Activated CD4-positive, alpha-beta T cell treated with anti-CD3 and anti-CD28 coated beads, Interleukin-2, amount 10 ng/mL, durations not matched to agents 7 days and 5 days (primary cell): ENCODE measurements at regions of chr16 and their contacts with region 1.

Region 1: GRCh38 chr16:89495121-89495520 is 4.8 kb upstream of the ANKRD11 start:
- DNase-seq: no peak
- H3K4me3 Mint-ChIP-seq: no peak overlapping the region
- H3K27ac Mint-ChIP-seq: no peak overlapping the region
- H3K4me1 Mint-ChIP-seq: peaks cover 33% of the 10 kb centered on the region
- H3K27me3 Mint-ChIP-seq: no peaks in the 10 kb centered on the region

Region 2: GRCh38 chr16:89453501-89454321 is 41.4 kb before region 1 on chr16:
- CTCF ChIA-PET with region 1: no interaction called
- POLR2A ChIA-PET with region 1: no interaction called
- DNase-seq: no peak
- H3K4me3 Mint-ChIP-seq: no peak overlapping the region
- H3K27ac Mint-ChIP-seq: peak overlapping the region; percentile 81
- H3K4me1 Mint-ChIP-seq: peaks cover 78% of the 10 kb centered on the region
- H3K27me3 Mint-ChIP-seq: no peaks in the 10 kb centered on the region

Region 3: GRCh38 chr16:89505204-89506112 is 10.3 kb after region 1 on chr16:
- CTCF ChIA-PET with region 1: interaction called, 11 read pairs
- POLR2A ChIA-PET with region 1: interaction called, 4 read pairs
- DNase-seq: peak; percentile 90
- H3K4me3 Mint-ChIP-seq: peak overlapping the region; percentile 73
- H3K27ac Mint-ChIP-seq: peak overlapping the region; percentile 96
- H3K4me1 Mint-ChIP-seq: peaks cover 39% of the 10 kb centered on the region
- H3K27me3 Mint-ChIP-seq: no peaks in the 10 kb centered on the region

Region 4: DNA sequence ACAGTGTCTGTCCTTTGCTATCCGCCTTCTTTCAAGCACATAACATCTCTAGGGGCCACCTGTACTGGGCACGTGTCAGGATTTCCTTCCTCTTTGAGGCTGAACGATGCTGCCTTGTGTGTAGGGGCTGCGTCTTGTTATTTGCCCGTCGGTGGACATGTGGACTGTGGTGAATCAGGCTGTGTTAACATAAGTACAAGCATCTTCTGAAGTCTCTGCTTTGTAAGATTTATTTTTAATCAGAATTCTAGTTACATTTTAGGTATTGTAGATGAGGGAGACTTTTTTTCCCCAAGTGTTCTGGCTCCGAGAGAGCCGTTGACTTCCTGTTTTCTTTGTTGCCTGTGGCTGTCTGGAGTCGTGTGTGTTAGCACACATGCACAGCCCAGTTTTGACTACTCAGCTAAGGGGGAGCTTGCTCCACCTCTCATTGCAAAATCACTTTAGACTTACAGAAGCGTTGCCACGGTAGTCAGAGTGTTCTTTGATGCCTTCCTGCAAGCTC is 39.2 kb after region 1 on chr16:
- CTCF ChIA-PET with region 1: no interaction called
- POLR2A ChIA-PET with region 1: no interaction called
- DNase-seq: peak; percentile 71
- H3K4me3 Mint-ChIP-seq: peak overlapping the region; percentile 26
- H3K27ac Mint-ChIP-seq: peak overlapping the region; percentile 89
- H3K4me1 Mint-ChIP-seq: peaks cover 24% of the 10 kb centered on the region
- H3K27me3 Mint-ChIP-seq: no peaks in the 10 kb centered on the region